ENCODE measurements at regions of chrX and their contacts with region 1.

Region 1: GRCh38 chrX:130060122-130061069 is 49.9 kb downstream of the ELF4 start:
- DNase-seq: peak; percentile 64 to 93
- H3K4me3 ChIP-seq: peak overlapping the region; percentile 66
- H3K27ac ChIP-seq: no peak overlapping the region
- H3K4me1 ChIP-seq: no peaks in the 10 kb centered on the region
- H3K27me3 ChIP-seq: no peaks in the 10 kb centered on the region
- CTCF ChIP-seq: peak; percentile 93

Region 2: DNA sequence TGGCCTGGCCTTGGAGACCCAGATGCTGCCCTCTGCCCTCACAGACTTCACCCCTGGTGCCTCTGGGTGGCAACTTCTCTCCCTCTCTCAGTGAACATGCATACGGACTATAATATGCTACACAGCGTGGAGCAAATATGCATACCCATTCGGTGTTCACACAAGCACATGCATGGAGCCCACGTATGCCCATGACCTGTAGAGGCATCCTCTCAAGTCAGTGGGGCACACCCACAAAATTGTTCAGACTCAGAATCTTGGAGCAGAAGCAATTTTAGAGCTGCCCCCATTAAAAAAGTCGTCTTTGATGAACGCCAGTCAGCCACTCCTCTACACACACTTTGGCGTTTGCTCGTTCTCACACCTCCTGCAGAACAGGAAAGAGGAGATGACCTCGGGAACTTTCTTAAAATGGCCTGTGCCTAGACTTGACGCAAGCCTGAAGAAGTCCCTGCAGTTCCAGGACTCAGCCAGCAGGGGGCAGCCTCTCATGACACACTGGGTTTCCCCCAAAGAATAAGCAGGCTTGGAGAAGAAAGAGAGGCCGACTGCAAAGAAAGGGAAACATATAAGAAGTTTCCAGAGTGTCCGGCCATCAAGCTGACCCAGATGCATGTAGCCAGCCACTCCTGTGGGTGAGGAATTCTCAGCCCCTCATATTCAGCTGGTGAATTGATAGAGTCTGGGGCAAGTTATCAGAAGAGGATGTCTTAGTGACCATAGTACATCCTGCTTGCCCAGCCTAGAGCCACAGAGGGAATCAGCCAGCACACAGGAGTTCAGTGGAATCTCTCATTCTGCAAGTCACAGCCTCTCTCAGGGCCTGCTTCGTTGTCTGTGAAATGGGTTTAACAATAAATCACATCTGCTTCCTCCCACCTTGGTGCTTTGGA is 422.9 kb before region 1 on chrX:
- CTCF ChIA-PET with region 1: no interaction called
- POLR2A ChIA-PET with region 1: no interaction called
- intact Hi-C with region 1: loop called (anchors 1 kb)
- DNase-seq: peak; percentile 41 to 66
- H3K4me3 ChIP-seq: no peak overlapping the region
- H3K27ac ChIP-seq: no peak overlapping the region
- H3K4me1 ChIP-seq: no peaks in the 10 kb centered on the region
- H3K27me3 ChIP-seq: no peaks in the 10 kb centered on the region
- CTCF ChIP-seq: peak; percentile 99

Region 3: DNA sequence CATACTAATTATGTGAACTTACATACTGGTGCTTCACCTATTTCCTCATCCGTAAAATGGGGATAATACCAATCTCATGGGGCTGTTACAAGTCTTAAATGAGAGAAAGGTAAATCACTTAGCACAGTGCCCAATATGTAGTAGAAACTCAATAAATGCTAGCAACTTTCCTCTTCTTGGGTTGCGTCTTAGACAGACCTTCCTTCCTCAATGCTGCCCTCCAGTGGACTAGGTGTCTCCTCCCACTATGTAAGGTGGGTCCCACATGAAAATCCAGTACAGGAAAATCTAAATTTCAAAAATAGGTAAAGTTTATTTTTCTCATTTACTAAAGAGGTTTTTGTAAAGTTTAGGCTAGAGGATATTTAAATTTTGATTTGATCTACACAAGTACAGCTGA is 237.3 kb before region 1 on chrX:
- CTCF ChIA-PET with region 1: interaction called, 3 read pairs
- POLR2A ChIA-PET with region 1: no interaction called
- intact Hi-C with region 1: loop called (anchors 2 kb)
- DNase-seq: peak in 1 of 2 experiments; percentile 18
- H3K4me3 ChIP-seq: no peak overlapping the region
- H3K27ac ChIP-seq: no peak overlapping the region
- H3K4me1 ChIP-seq: no peaks in the 10 kb centered on the region
- H3K27me3 ChIP-seq: no peaks in the 10 kb centered on the region
- CTCF ChIP-seq: peak; percentile 68

Region 4: GRCh38 chrX:130186651-130187050 is 126.3 kb after region 1 on chrX:
- CTCF ChIA-PET with region 1: no interaction called
- POLR2A ChIA-PET with region 1: no interaction called
- intact Hi-C with region 1: loop called (anchors 5 kb)
- DNase-seq: no peak
- H3K4me3 ChIP-seq: no peak overlapping the region
- H3K27ac ChIP-seq: no peak overlapping the region
- H3K4me1 ChIP-seq: no peaks in the 10 kb centered on the region
- H3K27me3 ChIP-seq: no peaks in the 10 kb centered on the region; the same call in 1 of the 2 replicates
- CTCF ChIP-seq: no peak

Region 5: DNA sequence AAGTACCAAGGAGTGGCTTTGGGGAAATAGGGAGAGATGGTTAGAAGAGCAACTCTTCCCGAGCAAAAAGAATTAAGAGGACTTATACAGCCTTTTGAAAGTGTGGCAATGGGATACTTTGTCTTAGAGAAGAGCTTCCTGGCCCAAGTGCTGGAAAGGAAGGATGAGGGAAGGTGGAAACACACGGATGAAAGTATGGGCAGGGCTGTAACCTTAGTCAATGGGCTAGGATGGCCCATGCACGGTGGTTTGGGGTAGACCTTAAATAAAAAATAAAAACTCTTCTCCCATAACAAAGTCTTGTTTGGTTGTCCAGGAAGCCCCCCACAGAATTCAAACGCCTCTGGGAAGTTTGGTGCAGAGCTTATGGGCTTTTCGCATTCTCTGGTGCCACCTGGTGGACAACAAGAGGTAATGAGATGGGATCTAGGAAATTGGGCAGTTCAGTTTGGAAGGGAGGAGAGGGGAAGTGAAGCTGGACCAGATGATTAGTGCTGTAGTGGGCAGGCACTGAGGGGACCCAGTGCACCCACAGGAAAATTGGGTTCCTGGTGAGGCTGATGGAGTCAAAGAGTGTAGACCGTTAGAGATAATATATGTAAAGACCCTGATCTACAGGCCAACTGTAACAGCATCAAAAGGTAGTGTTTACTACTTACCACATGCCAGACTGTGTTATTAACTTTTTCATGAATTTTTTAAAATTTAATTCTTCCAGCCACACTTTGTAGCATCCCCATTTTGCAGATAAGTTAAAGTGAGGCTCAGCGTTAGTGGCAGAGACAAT is 856.4 kb after region 1 on chrX:
- CTCF ChIA-PET with region 1: no interaction called
- POLR2A ChIA-PET with region 1: no interaction called
- intact Hi-C with region 1: loop called (anchors 10 kb)
- DNase-seq: peak; percentile 17 to 38
- H3K4me3 ChIP-seq: no peak overlapping the region
- H3K27ac ChIP-seq: no peak overlapping the region
- H3K4me1 ChIP-seq: no peaks in the 10 kb centered on the region
- H3K27me3 ChIP-seq: 0 out of 2 replicates have a peak, but pooled peaks cover 6% of the 10 kb centered on the region
- CTCF ChIP-seq: peak; percentile 96